Cardiac septum (tissue), 1 donor: ENCODE measurements at regions of chr4 and their contacts with region 1.

Region 1: DNA sequence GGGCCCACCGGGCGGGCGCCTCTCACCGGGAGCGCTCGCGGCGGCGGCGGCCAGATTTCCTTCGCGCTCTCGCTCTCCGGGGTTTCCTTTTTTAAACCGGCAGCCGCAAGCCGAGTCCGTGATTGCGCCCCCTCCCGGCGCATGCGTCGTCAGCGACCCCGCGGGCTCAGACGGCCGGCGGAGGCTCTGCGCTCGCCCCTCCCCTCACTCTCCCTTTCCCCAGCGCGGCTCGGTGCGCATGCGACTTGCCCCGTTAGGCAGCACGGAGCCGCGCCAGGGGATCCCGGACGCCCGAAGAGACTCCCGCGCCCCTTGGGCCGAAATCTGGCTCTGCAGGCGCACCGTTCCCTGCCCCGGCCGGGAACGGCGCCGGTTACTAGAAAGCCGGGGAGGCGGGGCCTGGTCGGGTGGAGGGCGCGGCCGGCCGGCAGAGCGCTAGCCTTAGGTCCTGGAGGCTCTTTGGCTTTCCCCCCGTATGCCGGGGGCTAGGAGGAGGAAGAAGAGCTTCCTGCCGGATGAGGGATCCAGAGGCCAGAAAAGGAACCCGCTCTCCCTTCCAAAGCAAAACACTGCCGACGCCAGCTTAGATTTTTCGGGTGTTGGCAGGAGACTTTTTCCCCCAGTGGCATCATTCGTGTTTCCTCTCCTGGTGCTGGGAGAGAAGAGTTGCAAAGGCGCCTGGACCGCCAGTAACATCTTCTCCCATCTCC is at the start of gene CLOCK:
- DNase-seq: peak; percentile 93
- total RNA-seq, gene CLOCK: 32.0 TPM

Region 2: DNA sequence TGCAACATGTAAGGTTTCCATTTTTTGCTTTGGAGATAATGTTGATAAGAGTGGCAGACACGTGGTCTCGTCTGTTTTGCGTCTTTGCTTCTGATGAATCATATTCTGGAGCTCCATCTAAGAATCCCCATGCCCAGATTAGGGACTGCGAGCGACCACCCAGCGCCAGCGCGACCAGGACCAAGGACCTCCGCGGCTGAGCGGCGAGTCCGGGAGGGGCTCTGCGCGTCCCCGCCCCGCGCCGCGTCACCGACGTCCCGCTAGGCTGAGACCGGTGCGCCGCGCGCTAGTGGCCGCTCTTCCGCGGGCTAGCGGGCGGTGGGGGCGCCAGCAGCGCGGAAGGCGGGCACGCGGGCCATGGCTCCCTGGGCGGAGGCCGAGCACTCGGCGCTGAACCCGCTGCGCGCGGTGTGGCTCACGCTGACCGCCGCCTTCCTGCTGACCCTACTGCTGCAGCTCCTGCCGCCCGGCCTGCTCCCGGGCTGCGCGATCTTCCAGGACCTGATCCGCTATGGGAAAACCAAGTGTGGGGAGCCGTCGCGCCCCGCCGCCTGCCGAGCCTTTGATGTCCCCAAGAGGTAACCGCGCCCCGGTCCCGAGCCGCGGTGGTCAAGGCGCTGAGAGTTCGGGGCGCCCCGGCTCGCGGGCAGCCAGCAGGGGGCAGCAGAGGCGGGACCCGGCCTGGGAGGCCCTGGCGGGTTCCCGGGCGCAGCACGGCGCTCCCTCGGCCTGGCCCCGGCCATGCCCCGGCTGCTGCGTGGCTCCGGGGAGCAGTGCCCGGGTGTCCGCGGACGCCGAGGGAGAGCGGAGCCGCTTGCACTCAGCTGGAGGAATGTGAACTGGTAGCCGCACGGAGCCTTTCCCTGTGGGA is 200.7 kb before region 1 on chr4 and contains the start of gene SRD5A3:
- intact Hi-C with region 1: loop called (anchors 2 kb)
- DNase-seq: peak; percentile 93
- total RNA-seq, gene SRD5A3: 7.3 TPM

Region 3: DNA sequence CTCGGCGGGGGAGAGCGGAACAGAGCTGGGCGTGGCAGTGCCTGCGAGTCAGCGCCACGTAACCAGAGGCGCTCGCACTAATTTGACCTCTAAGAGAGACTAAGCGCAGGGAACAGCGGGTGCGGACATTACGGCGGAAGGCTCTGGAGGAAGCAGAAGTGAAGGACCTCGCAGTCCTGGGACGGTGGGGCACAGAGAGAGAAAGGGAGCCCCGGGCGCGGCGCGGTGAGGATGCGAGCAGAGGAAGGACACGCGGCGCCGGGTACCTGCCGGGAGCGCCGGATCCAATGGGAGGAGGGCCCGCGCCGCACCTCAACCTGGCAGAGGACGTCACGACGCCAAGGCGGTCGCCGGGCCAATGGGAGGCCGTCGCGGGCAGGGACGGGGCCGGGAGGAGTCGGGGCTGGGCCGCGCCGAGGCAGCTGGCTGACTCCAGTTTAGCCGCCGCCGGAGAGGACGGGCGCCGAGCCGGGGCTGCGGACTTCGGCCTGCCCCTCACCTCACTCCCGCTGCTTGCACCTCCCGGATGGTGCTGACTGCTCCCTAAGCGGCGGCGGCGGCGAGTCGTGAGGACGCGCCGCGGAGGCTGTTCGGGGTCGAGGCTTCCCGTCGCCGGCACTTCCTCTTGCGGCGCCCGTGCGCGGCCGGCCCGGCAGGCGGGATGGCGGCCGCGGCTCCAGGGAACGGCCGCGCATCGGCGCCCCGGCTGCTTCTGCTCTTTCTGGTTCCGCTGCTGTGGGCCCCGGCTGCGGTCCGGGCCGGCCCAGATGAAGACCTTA is 151.2 kb before region 1 on chr4 and contains the start of gene TMEM165:
- intact Hi-C with region 1: loop called (anchors 1 kb)
- DNase-seq: peak; percentile 97
- total RNA-seq, gene TMEM165: 56.4 TPM

Region 4: GRCh38 chr4:55568905-55569504 is 22.1 kb after region 1 on chr4:
- intact Hi-C with region 1: no loop called
- DNase-seq: no peak

Region 5: GRCh38 chr4:55853484-55854046 is 306.7 kb after region 1 on chr4 and contains the start of gene EXOC1:
- intact Hi-C with region 1: loop called (anchors 5 kb)
- DNase-seq: peak; percentile 98
- total RNA-seq, gene EXOC1: 26.6 TPM